Left colon (tissue), 2 donors: ENCODE measurements at regions of chr2 and their contacts with region 1.

Region 1: GRCh38 chr2:9205963-9206948 is at the start of gene ASAP2:
- DNase-seq: peak; percentile 62 to 81
- ATAC-seq: peak; percentile 62
- total RNA-seq, gene ASAP2: 63.8 to 71.0 TPM

Region 2: GRCh38 chr2:8219631-8220355 is 986.5 kb before region 1 on chr2:
- intact Hi-C with region 1: no loop called
- DNase-seq: no peak
- ATAC-seq: no peak

Region 3: DNA sequence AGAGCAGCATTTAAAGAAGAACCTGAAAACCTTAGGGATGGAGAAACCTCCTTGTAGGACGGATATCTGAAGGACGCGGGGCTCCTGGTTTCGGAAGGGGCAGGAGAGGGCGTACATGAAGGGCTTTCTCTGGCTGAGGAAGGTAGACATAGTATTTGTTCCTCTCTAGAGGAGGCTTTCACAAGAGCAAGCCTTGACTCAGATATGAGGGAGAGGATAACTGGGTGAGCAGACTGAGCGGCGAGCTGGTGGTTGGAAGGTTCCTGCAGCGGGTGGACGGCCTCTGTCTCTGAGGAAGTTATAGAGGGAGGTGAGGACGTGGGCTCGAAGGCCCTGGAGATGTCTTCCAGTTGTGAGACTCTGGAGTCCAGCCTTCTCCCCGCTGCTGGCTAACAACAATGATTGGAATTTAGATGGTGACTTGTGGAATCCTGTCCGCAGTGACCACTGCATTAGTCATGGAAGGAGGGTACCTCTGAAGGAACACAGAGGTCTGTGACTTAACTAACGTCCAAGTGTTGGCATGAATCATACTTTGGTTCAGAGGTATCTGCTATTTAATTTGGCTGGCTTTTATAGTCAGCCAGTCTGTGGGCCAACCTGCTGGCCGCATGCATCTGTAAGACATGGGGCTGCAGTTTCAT is 81.3 kb after region 1 on chr2:
- intact Hi-C with region 1: no loop called
- DNase-seq: no peak
- ATAC-seq: no peak

Region 4: DNA sequence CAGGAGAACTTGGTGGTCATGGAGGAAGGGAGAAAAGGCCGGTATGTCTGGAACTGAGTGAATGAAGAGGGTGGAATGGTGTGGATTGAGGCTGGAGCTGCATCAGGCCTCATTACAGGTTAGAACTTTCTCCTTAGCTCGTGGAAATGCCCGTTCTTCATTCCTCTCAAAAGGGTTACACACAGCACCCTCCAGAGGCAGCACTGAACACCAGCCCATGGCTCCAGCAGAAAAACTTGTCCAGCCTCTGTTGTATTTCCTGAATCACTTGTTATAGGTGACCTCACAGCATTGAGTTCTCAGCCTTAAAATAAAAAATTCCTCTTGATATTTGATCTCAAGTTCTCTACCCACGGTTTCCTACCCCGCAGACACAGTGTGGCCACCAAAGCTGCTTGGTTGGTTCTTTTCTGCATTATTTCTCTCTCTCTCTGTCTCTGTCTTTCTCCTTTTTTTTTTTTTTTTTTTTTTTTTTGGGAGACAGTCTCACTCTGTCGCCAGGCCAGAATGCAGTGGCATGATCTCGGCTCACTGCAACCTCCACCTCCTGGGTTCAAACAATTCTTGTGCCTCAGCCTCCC is 127.4 kb after region 1 on chr2:
- intact Hi-C with region 1: loop called in 1 of 2 experiments (anchors 5 kb)
- DNase-seq: peak; percentile 60 to 80
- ATAC-seq: peak; percentile 50

Region 5: GRCh38 chr2:9708683-9709538 is 502.7 kb after region 1 on chr2:
- intact Hi-C with region 1: no loop called
- DNase-seq: no peak
- ATAC-seq: no peak